GM23248 (cell line): ENCODE measurements at regions of chr4 and their contacts with region 1.

Region 1: DNA sequence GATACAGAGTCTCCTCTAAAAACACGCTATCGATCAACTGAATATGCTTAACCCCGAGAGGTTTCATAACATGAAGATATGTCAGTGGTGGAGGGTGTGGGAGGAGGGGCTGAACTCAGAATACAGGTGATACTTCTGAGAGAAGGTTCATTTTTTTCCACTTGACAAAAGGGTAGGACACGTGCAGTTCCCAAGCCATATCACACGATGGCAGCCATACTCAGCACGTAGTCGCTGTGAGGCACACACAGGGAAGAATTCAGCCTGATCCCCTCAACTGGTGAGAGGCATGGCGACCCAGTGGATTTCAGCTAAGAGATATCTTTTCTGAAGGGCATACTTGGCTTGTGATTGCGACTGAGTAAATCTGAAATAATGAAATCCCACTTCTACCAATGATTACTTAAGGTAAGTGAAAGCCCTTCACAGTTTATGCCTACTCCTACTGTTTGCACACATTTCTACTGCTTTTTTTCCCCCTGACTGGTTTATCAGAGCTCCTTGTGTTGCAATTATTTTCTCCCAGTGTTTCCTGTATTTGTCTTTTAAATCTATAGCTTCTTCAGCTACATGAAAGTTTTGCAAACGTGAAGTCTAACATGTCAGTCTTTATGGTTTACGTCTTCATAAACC is 133.1 kb downstream of the CORIN start:
- DNase-seq: peak; percentile 52
- H3K4me3 ChIP-seq: no peak overlapping the region
- H3K27ac ChIP-seq: no peak overlapping the region
- H3K4me1 ChIP-seq: no peaks in the 10 kb centered on the region
- H3K27me3 ChIP-seq: peaks cover 34% of the 10 kb centered on the region; the same call in 1 of the 2 replicates

Region 2: DNA sequence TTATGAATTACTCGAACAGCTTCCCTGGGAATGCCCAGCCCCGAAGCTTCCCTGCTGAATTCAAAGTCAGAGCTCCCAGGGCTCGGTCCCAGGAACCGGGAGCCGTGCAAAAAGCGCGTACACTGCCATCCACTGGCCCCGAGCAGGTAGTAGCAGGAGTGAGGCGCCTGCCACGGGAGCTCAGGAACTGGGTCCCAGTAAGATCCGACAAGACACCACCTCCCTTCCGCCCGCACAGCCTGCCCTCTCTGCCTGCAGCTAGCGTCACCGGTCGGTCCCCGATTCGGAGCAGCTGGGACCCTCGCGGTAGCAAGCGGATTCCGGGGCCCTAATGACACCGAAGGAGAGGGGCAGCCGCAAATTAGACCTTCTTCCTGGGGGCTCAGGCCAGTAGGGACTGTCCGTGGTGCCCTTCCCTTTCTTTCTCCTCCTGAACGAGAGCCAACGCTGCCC is 131.9 kb after region 1 on chr4:
- in situ Hi-C with region 1: loop called (anchors 10 kb)
- DNase-seq: peak; percentile 92
- H3K4me3 ChIP-seq: peak overlapping the region; percentile 73
- H3K27ac ChIP-seq: no peak overlapping the region
- H3K4me1 ChIP-seq: peaks cover 10% of the 10 kb centered on the region
- H3K27me3 ChIP-seq: no peaks in the 10 kb centered on the region